GM13976 (cell line): ENCODE measurements at regions of chr9 and their contacts with region 1.

Region 1: DNA sequence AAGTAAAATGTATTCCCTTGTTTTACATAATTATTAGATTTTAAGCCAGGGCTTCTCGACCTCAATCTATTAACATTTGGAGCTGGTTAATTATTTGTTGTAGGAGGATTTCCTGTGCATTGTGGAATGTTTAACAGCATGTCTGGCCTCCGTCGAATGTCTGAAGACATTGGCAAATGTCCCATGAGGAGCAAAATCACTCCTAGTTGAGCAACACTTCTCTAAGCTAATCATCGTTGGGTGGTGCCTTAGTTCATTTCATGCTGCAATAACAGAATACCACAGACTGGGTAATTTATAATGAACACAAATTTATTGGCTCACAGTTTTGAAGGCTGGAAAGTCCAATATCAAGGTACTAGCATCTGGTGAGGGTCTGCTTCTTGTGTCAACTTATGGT is 13.4 kb upstream of the VPS13A start:
- DNase-seq: no peak
- CTCF ChIP-seq: no peak

Region 2: GRCh38 chr9:76393963-76394679 is 769.8 kb before region 1 on chr9 and contains the start of gene RFK:
- in situ Hi-C with region 1: no loop called
- DNase-seq: peak; percentile 96
- CTCF ChIP-seq: peak; percentile 68

Region 3: DNA sequence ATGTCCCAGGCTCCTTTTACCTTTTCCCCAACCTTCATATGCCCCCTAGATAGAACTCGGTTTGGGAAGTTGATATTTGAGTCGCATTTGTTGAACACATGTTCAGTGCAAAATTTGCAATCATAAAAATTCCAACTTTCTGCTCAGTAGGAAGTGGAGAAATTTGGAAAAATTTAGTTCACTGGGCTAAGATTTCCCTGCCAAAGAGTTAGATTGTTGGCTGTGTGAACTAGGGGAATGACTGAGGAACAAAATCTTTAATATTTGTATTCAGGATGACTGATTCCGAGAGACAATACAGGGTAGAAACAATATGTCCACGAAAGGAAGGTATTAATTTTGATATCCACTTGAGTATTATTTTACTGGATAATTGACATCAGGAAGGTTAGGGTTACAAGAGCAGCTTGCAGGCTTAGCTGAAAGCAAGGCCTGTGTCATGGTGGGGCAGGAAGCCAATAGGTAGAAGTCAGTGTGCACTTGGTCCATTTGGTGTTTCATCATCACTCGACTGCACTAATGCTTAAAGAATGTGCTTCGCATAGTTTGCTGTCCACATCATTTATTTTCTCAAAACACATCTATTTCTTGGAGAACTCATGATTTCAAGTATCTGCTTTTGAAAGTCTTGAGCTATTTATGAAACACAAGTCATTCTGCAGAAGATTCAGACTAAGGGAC is 543.6 kb after region 1 on chr9:
- in situ Hi-C with region 1: no loop called
- DNase-seq: no peak
- CTCF ChIP-seq: no peak

Region 4: GRCh38 chr9:77751341-77752091 is 587.6 kb after region 1 on chr9:
- in situ Hi-C with region 1: loop called (anchors 25 kb)
- DNase-seq: peak; percentile 17
- CTCF ChIP-seq: peak; percentile 14